ENCODE measurements at regions of chr3 and their contacts with region 1.

Region 1: DNA sequence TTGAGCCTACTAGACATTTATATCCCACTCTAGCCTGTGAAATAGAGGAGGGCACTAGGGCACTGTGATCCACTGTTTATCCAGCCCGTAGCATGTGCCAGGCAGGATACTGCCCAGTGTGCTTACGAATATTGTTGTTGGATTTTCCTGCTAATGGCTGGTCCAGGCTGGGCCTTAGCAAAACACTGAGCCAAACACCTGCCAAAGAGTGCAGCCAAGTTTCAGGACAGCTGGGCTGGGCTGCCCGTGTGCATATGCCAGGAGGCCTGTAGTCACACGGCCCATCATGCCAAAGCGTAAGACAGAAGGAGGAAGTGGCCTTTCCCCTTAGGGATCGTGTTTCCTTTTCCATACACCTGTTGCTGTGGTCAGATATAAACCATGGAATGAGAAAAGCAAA is 54.5 kb upstream of the ABHD10 start:
- DNase-seq: peak; percentile 87 to 91
- ATAC-seq: peak; percentile 97 to 99
- H3K4me3 ChIP-seq: no peak overlapping the region
- H3K27ac ChIP-seq: peak overlapping the region; percentile 62 to 72 (median 66)
- H3K4me1 ChIP-seq: peaks cover 17 to 23% of the 10 kb centered on the region in 2 donors
- H3K27me3 ChIP-seq: no peaks in the 10 kb centered on the region
- CTCF ChIP-seq: no peak
- POLR2A ChIP-seq: no peak

Region 2: GRCh38 chr3:111338059-111338698 is 586.1 kb before region 1 on chr3:
- in situ Hi-C with region 1: no loop called
- intact Hi-C with region 1: no loop called
- DNase-seq: no peak
- ATAC-seq: no peak
- H3K4me3 ChIP-seq: no peak overlapping the region
- H3K27ac ChIP-seq: no peak overlapping the region
- H3K4me1 ChIP-seq: no peaks in the 10 kb centered on the region
- H3K27me3 ChIP-seq: no peaks in the 10 kb centered on the region
- CTCF ChIP-seq: peak in 1 of 5 experiments; percentile 10
- POLR2A ChIP-seq: no peak

Region 3: GRCh38 chr3:111978493-111979433 is 54.5 kb after region 1 on chr3 and contains the start of gene ABHD10:
- in situ Hi-C with region 1: no loop called
- intact Hi-C with region 1: loop called (anchors 2 kb)
- DNase-seq: peak; percentile 90 to 96
- ATAC-seq: peak; percentile 99 to 100
- H3K4me3 ChIP-seq: peak within 1 kb of the TSS; percentile 78 to 96 (median 86)
- H3K27ac ChIP-seq: peak within 1 kb of the TSS; percentile 76 to 88 (median 83)
- H3K4me1 ChIP-seq: peaks cover 12 to 13% of the 10 kb centered on the region in 2 donors
- H3K27me3 ChIP-seq: no peaks in the 10 kb centered on the region
- CTCF ChIP-seq: no peak
- POLR2A ChIP-seq: peak; percentile 70 to 75
- total RNA-seq, gene ABHD10: 6.3 to 13.3 (median 9.0) TPM

Measured in gastrocnemius medialis (tissue), 4 donors.